G401 (cell line): ENCODE measurements at regions of chr1 and their contacts with region 1.

Region 1: GRCh38 chr1:185156854-185157598 is at the starts of genes SWT1 and TRMT1L:
- DNase-seq: peak; percentile 100
- total RNA-seq, gene SWT1: 7.4 and 7.8 TPM in 2 replicates
- total RNA-seq, gene TRMT1L: 13.7 and 30.6 TPM in 2 replicates

Region 2: DNA sequence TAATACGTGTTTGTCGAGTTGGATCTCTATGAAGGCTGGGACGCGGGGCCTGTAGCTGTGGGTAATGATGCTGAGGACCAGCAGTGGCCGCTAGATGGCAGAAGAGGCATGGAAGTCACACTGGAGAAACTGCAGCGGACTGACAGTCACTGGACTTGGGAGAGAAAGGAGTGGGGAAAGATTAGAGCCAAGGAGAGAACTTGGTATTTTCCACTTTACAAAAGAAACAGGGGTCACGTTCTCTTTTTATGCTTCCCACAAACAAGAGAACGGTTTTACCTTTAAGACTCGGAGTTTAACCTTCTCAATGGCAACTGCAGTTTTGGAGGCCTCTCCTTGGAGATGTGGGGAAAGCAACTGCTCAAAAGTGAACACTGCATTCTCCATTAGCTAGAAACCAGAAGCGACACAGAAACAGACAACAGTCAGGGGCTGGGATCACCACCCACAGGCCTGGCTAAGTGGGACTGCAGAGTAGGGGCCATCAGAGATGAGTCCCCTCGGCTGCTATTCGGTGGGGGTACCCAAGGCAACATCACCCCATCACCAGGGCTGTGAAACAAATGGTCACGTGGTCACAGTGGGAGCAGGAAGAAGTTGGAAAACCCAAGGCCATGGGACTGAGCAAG is 351.2 kb before region 1 on chr1:
- in situ Hi-C with region 1: loop called (anchors 25 kb)
- DNase-seq: peak; percentile 90

Region 3: GRCh38 chr1:184982002-184982954 is 174.7 kb before region 1 on chr1:
- in situ Hi-C with region 1: loop called (anchors 10 kb)
- DNase-seq: peak; percentile 42

Region 4: GRCh38 chr1:185044981-185045813 is 111.8 kb before region 1 on chr1 and contains the start of gene RNF2:
- in situ Hi-C with region 1: no loop called
- DNase-seq: peak; percentile 77
- total RNA-seq, gene RNF2: 48.7 and 67.3 TPM in 2 replicates